ENCODE measurements at regions of chr5 and their contacts with region 1.

Region 1: DNA sequence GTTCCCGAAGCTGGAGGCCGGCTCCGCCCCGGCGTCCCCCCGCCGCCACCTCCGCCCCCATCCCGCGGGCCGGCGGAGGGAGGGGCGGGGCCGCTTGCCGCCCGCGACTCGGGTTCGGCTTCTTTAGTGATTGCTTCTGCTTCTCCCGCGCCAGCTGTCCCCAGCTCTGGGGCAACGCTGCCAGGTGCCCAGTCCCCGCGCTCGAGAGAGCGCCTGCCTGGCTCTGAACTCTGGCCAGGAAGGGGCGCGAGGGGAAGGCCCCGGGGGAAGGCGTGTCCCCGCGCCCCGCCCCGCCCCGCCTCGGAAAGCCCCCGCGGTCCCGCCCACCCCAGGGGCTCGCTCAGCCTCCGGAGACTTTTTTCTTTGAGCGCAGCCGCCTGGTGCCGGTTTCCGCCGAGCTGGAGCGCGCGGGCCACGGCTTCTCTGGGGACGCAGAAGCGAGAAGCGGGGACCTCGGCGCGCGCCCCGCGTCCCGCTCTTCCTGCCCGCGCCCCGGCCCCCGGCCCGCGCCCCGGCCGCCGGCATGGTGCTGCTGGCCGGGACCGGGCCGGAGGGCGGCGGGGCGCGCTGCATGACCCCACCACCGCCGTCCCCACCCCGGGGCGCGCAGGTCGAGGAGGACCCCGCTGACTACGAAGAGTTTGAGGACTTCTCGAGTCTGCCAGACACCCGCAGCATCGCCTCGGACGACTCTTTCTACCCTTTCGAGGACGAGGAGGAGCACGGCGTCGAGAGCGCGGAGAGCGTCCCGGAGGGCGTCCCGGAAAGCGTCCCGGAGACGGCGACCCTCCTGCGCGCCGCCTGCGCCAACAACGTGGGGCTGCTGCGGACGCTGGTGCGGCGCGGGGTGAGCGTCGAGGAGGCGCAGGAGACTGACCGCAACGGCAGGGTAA is at the start of gene ANKRD33B:
- DNase-seq: no peak
- H3K4me3 ChIP-seq: peak within 1 kb of the TSS; percentile 95
- H3K27me3 ChIP-seq: no peaks in the 10 kb centered on the region
- CTCF ChIP-seq: no peak
- polyA plus RNA-seq, gene ANKRD33B: 2.4 and 3.4 TPM in 2 replicates

Region 2: DNA sequence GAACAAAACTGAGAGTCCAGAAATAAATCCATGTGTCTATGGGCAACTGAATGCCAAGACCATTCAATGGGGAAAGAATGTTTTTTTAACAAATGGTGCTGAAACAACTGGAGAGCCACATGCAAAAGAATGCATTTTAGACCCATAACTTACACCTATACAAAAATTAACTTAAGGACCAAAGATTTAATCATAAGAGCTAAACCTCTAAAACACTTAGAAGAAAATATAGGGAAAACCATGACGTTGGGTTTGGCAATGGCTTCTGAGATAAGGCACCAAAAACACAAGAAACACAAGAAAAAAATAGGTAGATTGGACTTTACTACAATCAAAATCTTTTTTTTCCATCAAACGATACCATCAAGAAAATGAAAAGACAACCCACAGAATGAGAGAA is 48.7 kb before region 1 on chr5:
- CTCF ChIA-PET with region 1: no interaction called
- POLR2A ChIA-PET with region 1: interaction called, 14 read pairs
- DNase-seq: no peak
- H3K4me3 ChIP-seq: no peak overlapping the region
- H3K27me3 ChIP-seq: no peaks in the 10 kb centered on the region
- CTCF ChIP-seq: no peak

Region 3: GRCh38 chr5:10678236-10678635 is 114.0 kb after region 1 on chr5:
- CTCF ChIA-PET with region 1: no interaction called
- POLR2A ChIA-PET with region 1: no interaction called
- DNase-seq: no peak
- H3K4me3 ChIP-seq: no peak overlapping the region
- H3K27me3 ChIP-seq: no peaks in the 10 kb centered on the region
- CTCF ChIP-seq: no peak